Activated T-helper 2 cell treated with anti-CD3 and anti-CD28 coated beads, Interferon-gamma antibody, Interleukin-2, Interleukin-4, amounts not matched to agents 10 μg/mL and 5 μg/mL and 100 μg/mL, durations not matched to agents 14 hours and 24 hours and 36 hours (primary cell): ENCODE measurements at regions of chr10 and their contacts with region 1.

Region 1: DNA sequence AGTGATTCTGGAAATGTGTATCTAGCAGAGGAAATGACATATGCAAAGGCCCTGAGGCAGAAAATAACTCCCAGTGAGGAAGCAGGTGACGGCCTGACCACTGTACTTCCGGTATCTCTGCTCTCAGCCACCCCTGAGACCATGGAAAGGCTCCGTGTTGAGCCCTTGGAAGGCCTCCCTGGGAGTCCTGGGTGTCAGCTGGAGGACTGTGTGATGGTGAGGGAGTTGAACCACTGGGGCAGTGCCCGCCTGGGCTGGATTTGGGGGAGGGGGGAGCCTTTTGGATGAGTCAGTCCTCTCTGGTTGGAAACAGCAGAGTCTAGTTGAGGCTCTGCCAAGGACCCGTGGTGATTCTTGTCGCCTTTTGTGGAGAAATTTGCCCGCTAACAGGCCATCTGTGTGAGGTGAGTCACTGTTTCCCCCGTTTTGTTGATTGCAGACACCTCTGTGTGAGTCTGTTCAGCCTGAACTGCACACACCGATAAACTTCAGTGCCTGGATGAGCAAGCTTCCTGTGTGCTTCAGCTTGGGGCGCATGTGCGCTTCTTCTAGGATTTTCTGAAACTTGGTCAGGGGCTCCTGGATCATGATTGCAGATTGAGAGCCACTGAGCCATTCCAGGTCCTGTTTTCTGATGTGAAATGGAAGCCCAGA is 98.6 kb downstream of the GRK5 start:
- DNase-seq: peak; percentile 85
- H3K4me3 Mint-ChIP-seq: peak overlapping the region; percentile 74
- H3K27ac Mint-ChIP-seq: peak overlapping the region; percentile 100
- H3K4me1 Mint-ChIP-seq: peaks cover 70% of the 10 kb centered on the region
- H3K27me3 Mint-ChIP-seq: peaks cover 4% of the 10 kb centered on the region

Region 2: DNA sequence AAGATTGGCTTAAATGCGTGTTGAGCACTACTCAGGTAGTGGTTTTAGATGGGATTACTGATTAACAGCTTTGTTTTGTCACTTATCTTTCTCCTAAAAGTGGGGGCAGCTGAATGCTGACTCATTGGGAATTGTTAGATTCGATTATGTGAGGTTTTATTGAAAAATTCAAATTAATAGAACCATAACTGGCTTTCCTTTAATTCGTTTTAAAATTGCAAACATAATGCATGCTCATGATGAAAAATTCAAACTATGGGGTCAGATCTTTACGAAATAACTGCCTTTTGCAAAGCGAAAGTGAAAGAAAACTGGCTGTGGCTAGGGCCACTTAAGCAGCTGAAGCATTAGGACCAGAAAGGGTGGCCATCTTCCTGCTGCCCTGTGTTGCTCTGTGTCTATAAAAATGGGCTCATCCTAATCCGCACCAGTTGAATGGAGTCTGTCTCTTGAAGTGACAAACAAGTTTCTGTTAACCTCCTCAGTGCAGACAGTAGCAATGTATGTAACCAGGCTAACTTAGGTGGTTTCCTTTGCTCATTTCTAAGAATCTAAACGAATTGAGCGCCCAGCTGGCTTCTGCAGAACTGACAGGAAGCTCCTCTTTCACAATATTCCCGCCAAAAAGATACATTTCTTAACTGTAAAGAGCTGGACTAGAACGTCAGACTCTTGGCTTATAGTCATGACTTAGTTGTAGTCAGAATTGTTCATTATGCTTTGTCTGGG is 174.3 kb before region 1 on chr10:
- intact Hi-C with region 1: loop called (anchors 2 kb)
- DNase-seq: peak; percentile 60
- H3K4me3 Mint-ChIP-seq: peak overlapping the region; percentile 82
- H3K27ac Mint-ChIP-seq: peak overlapping the region; percentile 94
- H3K4me1 Mint-ChIP-seq: peaks cover 62% of the 10 kb centered on the region
- H3K27me3 Mint-ChIP-seq: no peaks in the 10 kb centered on the region

Region 3: GRCh38 chr10:119268871-119269506 is 37.0 kb before region 1 on chr10:
- intact Hi-C with region 1: loop called (anchors 1 kb)
- DNase-seq: peak; percentile 77
- H3K4me3 Mint-ChIP-seq: peak overlapping the region; percentile 53
- H3K27ac Mint-ChIP-seq: peak overlapping the region; percentile 99
- H3K4me1 Mint-ChIP-seq: peaks cover 47% of the 10 kb centered on the region
- H3K27me3 Mint-ChIP-seq: no peaks in the 10 kb centered on the region

Region 4: GRCh38 chr10:119416855-119417254 is 110.9 kb after region 1 on chr10:
- intact Hi-C with region 1: loop called (anchors 5 kb)
- DNase-seq: peak; percentile 54
- H3K4me3 Mint-ChIP-seq: no peak overlapping the region
- H3K27ac Mint-ChIP-seq: no peak overlapping the region
- H3K4me1 Mint-ChIP-seq: no peaks in the 10 kb centered on the region
- H3K27me3 Mint-ChIP-seq: no peaks in the 10 kb centered on the region

Region 5: DNA sequence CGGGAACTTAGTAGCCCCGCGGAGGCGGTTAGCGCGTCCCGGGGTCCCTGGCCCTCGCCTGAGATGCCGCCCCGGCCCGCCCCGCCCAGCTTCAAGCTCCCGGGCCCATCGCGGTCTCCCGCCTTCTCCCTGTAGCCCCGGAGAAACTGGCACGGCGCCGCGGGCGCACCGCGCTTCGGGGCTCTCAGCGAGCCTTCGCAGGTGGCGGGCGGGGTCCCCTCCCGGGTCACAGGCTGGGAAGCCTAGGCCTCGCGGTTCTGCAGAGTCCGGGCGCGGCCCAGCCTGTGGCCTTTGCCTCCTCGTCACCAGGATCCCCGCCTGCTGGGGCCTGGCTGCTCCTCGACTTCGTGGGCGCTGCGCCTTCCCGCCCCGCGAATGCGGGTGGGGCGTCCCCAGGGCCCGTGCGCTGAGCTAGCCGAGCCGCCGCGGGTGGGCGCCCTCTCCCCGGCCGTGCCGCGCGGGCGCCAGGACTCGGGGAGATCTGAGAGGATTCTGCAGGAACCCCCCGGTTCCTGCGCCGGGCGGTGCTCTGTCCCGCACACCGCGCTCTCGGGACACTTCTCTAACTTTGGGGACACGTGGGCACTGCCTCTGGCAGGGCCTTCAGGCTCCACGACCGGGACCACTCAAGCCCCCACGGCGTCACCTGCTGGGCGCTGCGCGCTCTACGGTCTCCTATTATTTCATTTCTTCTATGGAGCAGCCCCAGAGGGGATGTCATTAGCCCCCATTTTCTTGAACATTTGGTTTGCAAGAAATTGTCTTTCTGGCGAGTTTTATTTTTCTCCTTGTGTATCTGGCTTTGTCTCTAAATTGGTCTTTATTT is 237.2 kb after region 1 on chr10:
- intact Hi-C with region 1: loop called (anchors 5 kb)
- DNase-seq: peak; percentile 52
- H3K4me3 Mint-ChIP-seq: peak overlapping the region; percentile 88
- H3K27ac Mint-ChIP-seq: peak overlapping the region; percentile 86
- H3K4me1 Mint-ChIP-seq: peaks cover 39% of the 10 kb centered on the region
- H3K27me3 Mint-ChIP-seq: peaks cover 18% of the 10 kb centered on the region